Activated naive CD8-positive, alpha-beta T cell treated with anti-CD3 and anti-CD28 coated beads, Interleukin-2, amount 10 ng/mL, durations not matched to agents 7 days and 5 days (primary cell): ENCODE measurements at regions of chr1 and their contacts with region 1.

Region 1: DNA sequence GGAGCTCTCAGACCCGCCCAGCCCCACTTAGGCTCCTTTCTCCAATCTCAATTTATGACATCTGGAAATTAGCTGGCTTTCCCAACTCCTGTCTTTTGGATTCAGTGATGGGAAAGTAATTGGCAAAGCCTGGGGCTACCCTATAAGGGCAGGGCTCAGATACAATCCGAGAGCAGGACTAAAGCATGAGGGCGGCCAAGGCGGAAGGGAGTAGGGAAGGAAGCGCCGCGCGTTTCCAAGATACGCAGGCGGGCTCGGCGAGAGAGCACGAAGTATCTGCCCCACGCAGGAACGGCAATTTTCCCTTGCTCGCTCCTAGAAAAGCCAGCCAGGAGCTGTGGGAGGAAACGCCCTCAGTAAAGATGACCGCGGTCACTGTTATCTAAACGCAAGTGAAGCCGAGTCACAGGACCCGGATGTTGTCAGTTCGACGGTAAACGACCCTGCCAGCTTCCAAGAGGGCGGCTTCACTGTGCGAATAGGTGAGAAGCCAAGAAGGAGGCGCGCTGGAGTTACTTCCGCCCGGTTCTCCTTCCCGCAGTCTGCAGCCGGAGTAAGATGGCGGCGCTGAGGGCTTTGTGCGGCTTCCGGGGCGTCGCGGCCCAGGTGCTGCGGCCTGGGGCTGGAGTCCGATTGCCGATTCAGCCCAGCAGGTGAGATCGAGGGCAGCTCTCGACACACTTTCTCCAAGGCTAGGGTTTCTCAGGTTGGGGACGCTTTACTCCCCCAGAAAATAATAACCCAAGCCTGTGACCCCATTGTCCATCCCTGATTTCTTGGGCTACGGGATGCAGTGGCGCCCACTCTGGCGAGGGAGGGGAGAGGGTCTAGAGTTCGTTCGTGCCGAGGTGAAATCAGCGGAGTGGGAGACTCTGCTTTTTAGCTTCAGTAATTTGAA is at the start of gene NDUFS2:
- DNase-seq: peak; percentile 86
- ATAC-seq: peak; percentile 99
- H3K4me3 Mint-ChIP-seq: peak within 1 kb of the TSS; percentile 96
- H3K27ac Mint-ChIP-seq: peak within 1 kb of the TSS; percentile 97
- H3K4me1 Mint-ChIP-seq: peaks cover 61% of the 10 kb centered on the region
- H3K27me3 Mint-ChIP-seq: no peaks in the 10 kb centered on the region
- total RNA-seq, gene NDUFS2: 80.6 to 92.8 TPM

Region 2: DNA sequence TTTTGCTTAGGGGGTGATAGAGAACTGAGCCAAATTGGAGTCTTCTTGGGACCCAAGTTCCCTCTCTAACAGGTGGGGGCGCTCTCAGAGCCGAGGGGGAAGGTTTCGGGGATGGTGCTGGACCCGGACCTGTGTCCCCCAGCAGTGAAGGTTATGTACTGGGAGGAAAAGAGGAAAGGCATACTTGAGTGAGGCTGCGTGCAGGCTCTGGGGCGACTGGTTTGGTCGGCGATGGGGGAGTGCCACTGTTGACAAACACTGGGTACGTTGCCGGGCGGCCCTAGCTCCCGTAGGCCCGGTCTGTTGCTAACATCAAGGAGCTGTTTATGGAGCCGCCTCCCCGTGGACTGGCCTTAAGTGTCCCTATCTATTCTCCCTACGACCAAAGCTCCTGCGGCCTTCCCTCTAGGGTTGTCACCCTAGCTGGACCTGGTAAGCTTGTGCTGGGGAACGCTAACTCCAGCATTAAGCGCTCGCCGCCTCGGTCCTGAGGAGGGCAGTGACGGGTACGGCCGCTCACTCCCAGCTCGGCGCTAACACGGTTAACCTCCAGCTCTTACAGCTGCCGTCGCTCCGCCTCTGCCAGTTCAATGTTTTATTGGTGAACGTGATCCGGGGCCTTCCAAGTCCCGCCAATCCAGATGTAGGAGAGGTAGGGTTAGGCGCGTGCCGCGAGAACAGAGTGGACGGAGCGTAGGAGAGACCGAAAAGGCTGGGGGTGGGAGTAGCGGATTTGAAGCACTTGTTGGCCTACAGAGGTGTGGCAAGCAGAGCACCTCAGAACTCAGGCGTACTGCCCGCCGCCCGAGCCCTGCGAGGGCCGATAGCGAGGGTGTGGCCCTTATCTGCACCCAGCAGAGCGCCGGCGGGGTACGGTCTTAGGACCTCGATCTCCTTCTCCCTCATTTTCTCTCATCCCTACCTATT is 36.1 kb before region 1 on chr1 and contains the start of gene PPOX:
- POLR2A ChIA-PET with region 1: interaction called, 17 read pairs
- DNase-seq: peak; percentile 87
- ATAC-seq: peak; percentile 95
- H3K4me3 Mint-ChIP-seq: peak within 1 kb of the TSS; percentile 92
- H3K27ac Mint-ChIP-seq: peak within 1 kb of the TSS; percentile 97
- H3K4me1 Mint-ChIP-seq: peaks cover 30% of the 10 kb centered on the region
- H3K27me3 Mint-ChIP-seq: no peaks in the 10 kb centered on the region
- total RNA-seq, gene PPOX: 47.0 to 53.0 TPM

Region 3: GRCh38 chr1:161185282-161185682 is 16.8 kb before region 1 on chr1:
- POLR2A ChIA-PET with region 1: interaction called, 53 read pairs
- DNase-seq: peak; percentile 63
- ATAC-seq: peak; percentile 81
- H3K4me3 Mint-ChIP-seq: peak overlapping the region; percentile 72
- H3K27ac Mint-ChIP-seq: peak overlapping the region; percentile 97
- H3K4me1 Mint-ChIP-seq: peaks cover 64% of the 10 kb centered on the region
- H3K27me3 Mint-ChIP-seq: no peaks in the 10 kb centered on the region

Region 4: GRCh38 chr1:161225534-161226319 is 23.6 kb after region 1 on chr1 and contains the start of gene TOMM40L:
- POLR2A ChIA-PET with region 1: interaction called, 24 read pairs
- DNase-seq: peak; percentile 81
- ATAC-seq: peak; percentile 96
- H3K4me3 Mint-ChIP-seq: peak within 1 kb of the TSS; percentile 99
- H3K27ac Mint-ChIP-seq: peak within 1 kb of the TSS; percentile 97
- H3K4me1 Mint-ChIP-seq: peaks cover 31% of the 10 kb centered on the region
- H3K27me3 Mint-ChIP-seq: no peaks in the 10 kb centered on the region
- total RNA-seq, gene TOMM40L: 13.7 to 17.4 TPM

Region 5: DNA sequence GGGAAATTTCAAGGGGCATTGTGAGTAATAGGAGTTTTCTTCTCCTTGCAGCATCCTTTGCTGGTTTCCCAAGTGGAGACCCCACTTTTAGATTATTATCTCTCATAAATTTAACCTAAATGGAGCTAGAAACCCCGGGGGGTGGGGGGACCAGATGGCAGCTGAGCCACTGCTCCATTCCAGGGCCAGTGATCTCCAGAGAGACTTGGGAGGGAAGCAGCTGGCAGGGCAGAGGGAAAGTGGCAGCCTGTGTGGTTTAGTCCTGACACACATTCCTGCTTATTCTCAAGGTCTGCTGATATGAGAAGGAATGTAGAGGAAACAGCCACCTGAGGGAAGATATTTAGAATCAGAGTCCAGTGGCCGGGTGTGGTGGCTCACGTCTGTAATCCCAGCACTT is 72.8 kb after region 1 on chr1:
- POLR2A ChIA-PET with region 1: no interaction called
- DNase-seq: no peak
- ATAC-seq: no peak
- H3K4me3 Mint-ChIP-seq: no peak overlapping the region
- H3K27ac Mint-ChIP-seq: no peak overlapping the region
- H3K4me1 Mint-ChIP-seq: no peaks in the 10 kb centered on the region
- H3K27me3 Mint-ChIP-seq: peaks cover 28% of the 10 kb centered on the region

Region 6: DNA sequence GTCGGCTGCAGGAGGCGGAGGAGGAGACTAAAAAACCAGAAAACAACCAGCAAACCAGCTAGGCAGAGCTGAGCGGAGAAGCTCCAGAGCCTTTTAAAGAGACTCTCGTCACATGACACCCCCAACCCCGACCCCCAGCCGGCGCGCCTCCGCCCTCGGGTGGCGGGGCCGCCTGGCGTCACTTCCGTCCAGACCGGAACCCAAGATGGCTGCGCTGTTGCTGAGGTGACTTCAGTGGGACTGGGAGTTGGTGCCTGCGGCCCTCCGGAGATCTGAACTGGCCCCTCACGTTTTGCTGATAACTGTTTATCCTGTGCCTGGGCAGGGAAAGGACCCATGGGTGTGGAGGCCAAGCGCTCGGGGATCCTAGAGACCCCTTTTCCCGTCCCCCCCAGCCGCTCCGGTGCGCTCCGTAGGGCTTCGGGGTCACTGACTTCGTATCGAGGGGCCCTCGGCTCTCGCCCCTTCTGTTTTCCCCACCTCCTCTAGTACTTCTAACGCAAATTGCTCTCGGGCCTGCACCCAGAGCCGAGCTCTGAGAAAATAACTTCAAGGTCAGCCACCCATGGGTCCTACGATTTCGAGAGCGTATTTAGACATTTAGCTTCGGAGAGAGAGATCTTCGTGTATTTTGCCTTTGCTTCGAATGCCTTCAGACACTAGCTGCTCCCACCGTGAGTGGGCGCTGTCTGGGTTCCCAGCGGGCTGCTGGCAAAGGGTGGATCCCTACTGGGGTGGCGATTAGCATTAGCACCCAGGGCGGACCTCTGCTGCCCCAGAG is 112.3 kb after region 1 on chr1 and contains the start of gene SDHC:
- POLR2A ChIA-PET with region 1: interaction called, 11 read pairs
- DNase-seq: peak; percentile 91
- ATAC-seq: peak; percentile 98
- H3K4me3 Mint-ChIP-seq: peak within 1 kb of the TSS; percentile 99
- H3K27ac Mint-ChIP-seq: peak within 1 kb of the TSS; percentile 98
- H3K4me1 Mint-ChIP-seq: peaks cover 17% of the 10 kb centered on the region
- H3K27me3 Mint-ChIP-seq: peaks cover 2% of the 10 kb centered on the region
- total RNA-seq, gene SDHC: 148 to 150 TPM